ENCODE measurements at regions of chr9 and their contacts with region 1.

Region 1: GRCh38 chr9:121369595-121370265 is at the start of gene STOM:
- DNase-seq: no peak
- H3K4me3 ChIP-seq: peak within 1 kb of the TSS; percentile 67 to 94 (median 80)
- H3K27ac ChIP-seq: peak within 1 kb of the TSS; percentile 92 to 97 (median 96)
- H3K4me1 ChIP-seq: peaks cover 10 to 83% (median 66%) of the 10 kb centered on the region in 6 donors
- H3K27me3 ChIP-seq: no peaks in the 10 kb centered on the region
- CTCF ChIP-seq: no peak
- POLR2A ChIP-seq: peak in 2 of 3 donors; percentile 84 to 97
- total RNA-seq, gene STOM: 265 to 493 (median 335) TPM

Region 2: GRCh38 chr9:121141706-121142105 is 228.0 kb before region 1 on chr9:
- intact Hi-C with region 1: no loop called
- DNase-seq: no peak
- H3K4me3 ChIP-seq: no peak overlapping the region
- H3K27ac ChIP-seq: no peak overlapping the region
- H3K4me1 ChIP-seq: no peaks in the 10 kb centered on the region
- H3K27me3 ChIP-seq: no peaks in the 10 kb centered on the region
- CTCF ChIP-seq: no peak
- POLR2A ChIP-seq: no peak

Region 3: DNA sequence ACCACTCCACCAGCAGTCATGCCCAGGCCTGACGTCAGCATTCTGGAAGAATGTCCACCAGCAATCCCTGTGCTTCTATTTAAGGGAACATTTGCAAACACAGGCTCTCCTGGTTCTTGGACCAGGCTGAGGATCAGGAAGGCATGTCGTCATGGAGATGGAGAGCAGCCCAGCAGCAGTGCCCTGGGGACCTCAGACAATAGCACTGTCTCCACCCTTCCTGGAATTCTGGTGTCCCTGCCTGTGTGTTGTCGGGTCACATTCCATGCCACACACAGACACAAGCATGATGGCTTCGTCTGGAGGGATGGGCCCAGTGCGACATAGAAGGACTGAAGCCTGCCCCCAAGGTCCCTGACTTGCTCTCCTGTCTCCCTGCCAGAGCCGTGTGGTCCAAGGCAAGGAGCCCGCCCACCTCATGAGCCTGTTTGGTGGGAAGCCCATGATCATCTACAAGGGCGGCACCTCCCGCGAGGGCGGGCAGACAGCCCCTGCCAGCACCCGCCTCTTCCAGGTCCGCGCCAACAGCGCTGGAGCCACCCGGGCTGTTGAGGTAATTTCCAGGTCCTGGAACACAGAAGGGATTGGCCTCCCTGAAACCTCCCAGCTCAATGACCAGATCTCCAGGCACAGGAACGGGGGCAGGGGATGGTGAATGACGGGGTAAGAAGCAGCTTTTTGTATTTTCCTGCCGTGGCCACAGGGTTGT is 43.4 kb before region 1 on chr9:
- intact Hi-C with region 1: loop called (anchors 10 kb)
- DNase-seq: peak; percentile 88
- H3K4me3 ChIP-seq: no peak overlapping the region
- H3K27ac ChIP-seq: peak overlapping the region; percentile 70 to 88 (median 84)
- H3K4me1 ChIP-seq: peaks cover 0 to 86% (median 33%) of the 10 kb centered on the region in 6 donors
- H3K27me3 ChIP-seq: no peaks in the 10 kb centered on the region
- CTCF ChIP-seq: no peak
- POLR2A ChIP-seq: peak in 1 of 3 donors; percentile 14

Measured in spleen (tissue), 13 donors.